ENCODE measurements at regions of chr10 and their contacts with region 1.

Region 1: DNA sequence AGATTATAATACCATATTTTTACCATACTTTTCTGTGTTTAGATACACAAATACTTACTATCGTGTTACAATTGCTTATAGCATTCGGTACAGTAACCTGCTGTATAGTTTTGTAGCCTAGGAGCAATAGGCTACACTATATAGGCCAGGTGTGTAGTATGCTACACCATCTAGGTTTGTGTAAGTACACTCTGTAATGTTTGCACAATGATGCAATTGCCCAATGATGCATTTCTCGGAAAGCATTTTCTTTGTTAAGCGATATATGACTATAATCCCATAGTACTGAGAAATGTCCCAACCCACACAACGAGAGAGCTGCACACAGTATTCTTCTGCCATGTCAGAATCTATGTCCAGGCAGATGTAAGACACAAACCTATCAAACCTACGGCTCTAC is 160.0 kb downstream of the NEBL start:
- DNase-seq: no peak
- H3K4me3 ChIP-seq: no peak overlapping the region
- H3K27ac ChIP-seq: no peak overlapping the region
- H3K4me1 ChIP-seq: no peaks in the 10 kb centered on the region
- H3K27me3 ChIP-seq: no peaks in the 10 kb centered on the region
- CTCF ChIP-seq: no peak

Region 2: DNA sequence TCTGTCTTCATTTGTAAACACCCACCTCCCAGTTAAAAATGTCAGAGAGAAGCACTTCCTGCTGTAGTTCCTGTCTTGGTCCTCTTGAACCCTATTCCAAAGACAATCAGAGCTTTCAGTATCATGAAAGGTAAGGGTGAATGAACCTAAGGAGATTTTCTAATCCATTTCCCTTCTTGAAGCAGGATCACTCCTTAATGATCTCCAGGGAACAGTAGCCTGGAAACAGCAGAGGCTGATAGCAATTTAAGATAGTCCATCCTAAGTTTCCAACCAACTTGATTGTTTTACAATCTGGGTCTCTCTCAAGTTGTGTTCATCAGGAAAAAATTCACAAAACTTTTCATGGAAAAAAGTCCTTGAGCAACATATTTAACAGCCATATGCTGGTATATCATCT is 113.6 kb before region 1 on chr10:
- CTCF ChIA-PET with region 1: no interaction called
- POLR2A ChIA-PET with region 1: interaction called, 15 read pairs
- intact Hi-C with region 1: no loop called
- DNase-seq: no peak
- H3K4me3 ChIP-seq: no peak overlapping the region
- H3K27ac ChIP-seq: no peak overlapping the region
- H3K4me1 ChIP-seq: peaks cover 16% of the 10 kb centered on the region
- H3K27me3 ChIP-seq: no peaks in the 10 kb centered on the region
- CTCF ChIP-seq: no peak

Region 3: DNA sequence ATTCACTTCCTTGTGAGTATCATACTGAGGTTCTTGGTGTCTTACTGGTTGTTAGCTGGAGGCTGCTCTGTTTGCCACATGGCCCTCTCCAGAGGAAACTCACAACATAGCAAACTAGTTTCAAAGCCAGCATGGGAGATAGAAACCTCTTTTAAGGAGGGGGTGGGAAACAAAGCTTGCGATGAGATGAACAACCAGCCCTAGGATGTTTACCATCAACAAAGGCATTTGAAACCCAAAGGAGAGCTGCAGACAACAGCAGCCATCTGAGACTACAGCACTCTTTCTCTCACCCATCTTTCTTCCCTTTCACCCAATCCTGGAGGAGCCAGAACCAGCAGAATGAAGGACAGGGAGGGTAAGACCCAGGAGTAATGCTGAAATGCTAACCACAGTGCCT is 22.1 kb before region 1 on chr10:
- CTCF ChIA-PET with region 1: no interaction called
- POLR2A ChIA-PET with region 1: no interaction called
- intact Hi-C with region 1: loop called (anchors 2 kb)
- DNase-seq: no peak
- H3K4me3 ChIP-seq: no peak overlapping the region
- H3K27ac ChIP-seq: no peak overlapping the region
- H3K4me1 ChIP-seq: no peaks in the 10 kb centered on the region
- H3K27me3 ChIP-seq: no peaks in the 10 kb centered on the region
- CTCF ChIP-seq: no peak

Region 4: DNA sequence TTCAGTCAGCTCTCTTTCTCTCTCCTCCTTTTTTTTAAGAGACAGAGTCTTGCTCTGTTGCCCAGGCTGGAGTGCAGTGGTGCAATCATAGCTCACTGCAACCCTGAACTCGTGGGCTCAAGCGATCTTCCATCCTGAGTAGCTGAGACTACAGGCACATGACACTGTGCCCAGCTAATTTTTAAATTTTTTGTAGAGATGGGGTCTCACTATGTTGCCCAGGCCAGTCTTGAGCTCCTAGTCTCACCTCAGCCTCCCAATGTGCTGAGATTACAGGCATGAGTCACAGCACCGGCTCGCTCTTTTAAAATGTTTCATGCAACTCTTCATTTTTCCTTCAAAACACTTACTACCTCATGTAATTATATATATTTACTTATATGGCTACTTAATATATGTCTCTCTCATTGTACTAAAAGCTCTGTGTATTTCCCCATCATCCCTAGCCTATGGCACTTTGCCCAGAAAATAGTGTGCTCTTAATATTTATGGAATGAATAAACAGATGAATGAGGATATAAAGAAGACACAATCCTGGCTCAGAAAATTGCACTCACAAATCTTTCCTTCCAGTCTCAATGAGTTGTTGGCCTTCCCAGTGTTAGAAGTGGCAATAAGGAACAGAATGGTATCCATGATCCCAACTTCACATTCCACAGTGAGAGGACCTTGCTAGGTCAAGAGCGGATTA is 1446.8 kb after region 1 on chr10:
- CTCF ChIA-PET with region 1: no interaction called
- POLR2A ChIA-PET with region 1: no interaction called
- intact Hi-C with region 1: no loop called
- DNase-seq: peak; percentile 21
- H3K4me3 ChIP-seq: no peak overlapping the region
- H3K27ac ChIP-seq: no peak overlapping the region
- H3K4me1 ChIP-seq: no peaks in the 10 kb centered on the region
- H3K27me3 ChIP-seq: no peaks in the 10 kb centered on the region
- CTCF ChIP-seq: no peak